Caco-2 (cell line): ENCODE measurements at regions of chr12 and their contacts with region 1.

Region 1: GRCh38 chr12:19439059-19440018 is at the start of gene AEBP2:
- DNase-seq: peak; percentile 94 to 95
- H3K4me3 ChIP-seq: peak within 1 kb of the TSS; percentile 100
- H3K4me3 Mint-ChIP-seq: peak within 1 kb of the TSS; percentile 98
- H3K27ac Mint-ChIP-seq: peak within 1 kb of the TSS; percentile 97
- H3K4me1 ChIP-seq: peaks cover 20% of the 10 kb centered on the region
- H3K4me1 Mint-ChIP-seq: peaks cover 23% of the 10 kb centered on the region
- H3K27me3 ChIP-seq: no peaks in the 10 kb centered on the region
- H3K27me3 Mint-ChIP-seq: no peaks in the 10 kb centered on the region
- CTCF ChIP-seq: no peak
- total RNA-seq, gene AEBP2: 68.0 and 76.5 TPM in 2 replicates

Region 2: GRCh38 chr12:19402743-19403492 is 36.4 kb before region 1 on chr12:
- CTCF ChIA-PET with region 1: no interaction called
- POLR2A ChIA-PET with region 1: no interaction called
- intact Hi-C with region 1: loop called (anchors 5 kb)
- DNase-seq: no peak
- H3K4me3 ChIP-seq: no peak overlapping the region
- H3K4me3 Mint-ChIP-seq: no peak overlapping the region
- H3K27ac Mint-ChIP-seq: no peak overlapping the region
- H3K4me1 ChIP-seq: no peaks in the 10 kb centered on the region
- H3K4me1 Mint-ChIP-seq: no peaks in the 10 kb centered on the region
- H3K27me3 ChIP-seq: no peaks in the 10 kb centered on the region
- H3K27me3 Mint-ChIP-seq: no peaks in the 10 kb centered on the region
- CTCF ChIP-seq: no peak

Region 3: GRCh38 chr12:19507823-19508222 is 68.5 kb after region 1 on chr12:
- CTCF ChIA-PET with region 1: no interaction called
- POLR2A ChIA-PET with region 1: no interaction called
- intact Hi-C with region 1: loop called (anchors 2 kb)
- DNase-seq: no peak
- H3K4me3 ChIP-seq: no peak overlapping the region
- H3K4me3 Mint-ChIP-seq: no peak overlapping the region
- H3K27ac Mint-ChIP-seq: no peak overlapping the region
- H3K4me1 ChIP-seq: peaks cover 34% of the 10 kb centered on the region
- H3K4me1 Mint-ChIP-seq: peaks cover 29% of the 10 kb centered on the region
- H3K27me3 ChIP-seq: no peaks in the 10 kb centered on the region
- H3K27me3 Mint-ChIP-seq: no peaks in the 10 kb centered on the region
- CTCF ChIP-seq: no peak